BJ (cell line): ENCODE measurements at regions of chr2 and their contacts with region 1.

Region 1: DNA sequence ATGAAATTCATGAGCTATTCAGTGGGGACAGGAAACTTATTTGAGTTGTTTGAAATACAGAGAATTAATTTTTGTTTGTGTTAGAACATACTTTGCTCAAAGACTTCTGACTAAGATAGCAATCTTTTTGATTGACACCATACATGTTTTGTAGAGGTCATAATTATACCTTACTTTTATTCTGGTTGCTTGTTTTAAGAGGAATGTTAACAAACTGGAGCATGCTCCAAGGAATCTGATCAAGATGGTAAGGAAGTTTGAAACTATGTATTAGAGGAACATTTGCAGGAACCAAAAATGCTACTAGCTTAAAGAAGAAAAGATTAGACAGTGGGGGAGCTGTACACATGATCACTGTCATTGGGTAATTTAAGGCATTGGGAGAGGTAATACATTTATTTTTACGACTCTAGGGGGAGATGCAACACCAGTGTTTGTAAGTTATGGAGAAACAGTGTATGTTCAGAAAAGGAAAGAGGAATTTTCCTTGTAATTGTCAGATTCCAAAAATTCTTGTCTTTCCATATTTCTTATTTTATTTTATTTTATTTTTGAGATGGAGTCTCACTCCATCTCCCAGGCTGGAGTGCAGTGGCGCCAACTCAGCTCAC is 8.0 kb downstream of the AGFG1 start:
- DNase-seq: no peak
- H3K4me3 ChIP-seq: no peak overlapping the region
- H3K27me3 ChIP-seq: no peaks in the 10 kb centered on the region
- CTCF ChIP-seq: peak; percentile 24

Region 2: GRCh38 chr2:227460070-227460485 is 19.9 kb before region 1 on chr2:
- CTCF ChIA-PET with region 1: no interaction called
- POLR2A ChIA-PET with region 1: no interaction called
- DNase-seq: no peak
- H3K4me3 ChIP-seq: no peak overlapping the region
- H3K27me3 ChIP-seq: no peaks in the 10 kb centered on the region
- CTCF ChIP-seq: no peak

Region 3: DNA sequence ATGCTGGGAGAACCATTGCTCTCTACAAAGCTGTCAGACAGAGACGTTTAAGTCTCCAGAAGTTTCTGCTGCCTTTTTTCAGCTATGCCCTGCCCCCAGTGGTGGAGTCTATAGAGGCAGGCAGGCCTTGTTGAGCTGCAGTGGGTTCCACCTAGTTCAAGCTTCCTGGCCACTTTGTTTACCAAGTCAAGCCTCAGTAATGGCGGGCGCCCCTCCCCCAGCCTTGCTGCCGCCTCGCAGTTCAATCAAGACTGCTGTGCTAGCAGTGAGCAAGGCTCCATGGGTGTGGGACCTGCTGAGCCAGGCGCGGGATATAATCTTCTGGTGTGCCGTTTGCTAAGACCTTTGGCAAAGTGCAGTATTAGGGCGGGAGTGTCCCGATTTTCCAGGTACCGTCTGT is 66.0 kb after region 1 on chr2:
- CTCF ChIA-PET with region 1: no interaction called
- POLR2A ChIA-PET with region 1: interaction called, 13 read pairs
- DNase-seq: no peak
- H3K4me3 ChIP-seq: no peak overlapping the region
- H3K27me3 ChIP-seq: no peaks in the 10 kb centered on the region
- CTCF ChIP-seq: 0 out of 2 replicates have a peak, but pooled peaks have one; percentile 16